ENCODE measurements at regions of chr6 and their contacts with region 1.

Region 1: DNA sequence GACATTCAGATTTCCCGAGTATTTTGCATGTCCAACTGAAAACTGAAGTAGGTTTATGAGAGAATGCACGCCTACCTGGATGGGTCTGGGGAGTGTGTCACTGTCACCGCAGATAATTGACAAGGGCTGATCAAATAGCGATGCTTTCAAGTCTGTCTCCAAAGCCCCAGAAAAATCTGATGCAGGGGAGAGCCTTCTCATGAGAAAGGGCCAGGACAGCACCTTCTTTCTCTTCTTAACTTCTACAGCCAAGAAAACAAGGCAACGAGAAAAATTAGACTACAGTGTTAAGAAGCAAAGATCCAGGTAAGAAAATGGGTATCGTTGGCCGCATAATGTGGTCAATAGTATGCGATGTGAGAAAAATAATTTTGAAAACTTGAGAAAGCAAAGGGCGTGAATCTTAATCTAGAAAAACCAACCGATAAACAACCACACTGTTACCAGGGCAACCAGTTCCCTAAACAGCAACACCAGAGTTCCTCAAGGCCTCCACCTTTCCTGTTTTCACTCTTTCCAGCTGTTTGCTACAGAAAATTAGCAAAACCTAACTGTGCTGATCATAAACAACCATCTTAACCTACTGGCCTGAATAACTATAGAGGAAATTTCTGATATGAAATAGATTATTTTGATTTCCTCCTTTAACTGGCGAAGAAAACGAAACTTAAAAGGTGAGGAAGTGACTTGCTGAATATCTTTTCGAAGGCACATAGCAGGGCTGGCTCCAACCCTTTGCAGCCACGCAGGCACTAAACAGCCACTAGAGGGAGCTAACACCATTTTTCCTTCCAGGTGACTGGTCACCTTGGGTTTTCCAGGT is 2.6 kb downstream of the TAGAP start:
- DNase-seq: peak; percentile 86
- H3K4me3 Mint-ChIP-seq: peak overlapping the region; percentile 94
- H3K27ac Mint-ChIP-seq: peak overlapping the region; percentile 95
- H3K4me1 Mint-ChIP-seq: peaks cover 69% of the 10 kb centered on the region
- H3K27me3 Mint-ChIP-seq: no peaks in the 10 kb centered on the region

Region 2: DNA sequence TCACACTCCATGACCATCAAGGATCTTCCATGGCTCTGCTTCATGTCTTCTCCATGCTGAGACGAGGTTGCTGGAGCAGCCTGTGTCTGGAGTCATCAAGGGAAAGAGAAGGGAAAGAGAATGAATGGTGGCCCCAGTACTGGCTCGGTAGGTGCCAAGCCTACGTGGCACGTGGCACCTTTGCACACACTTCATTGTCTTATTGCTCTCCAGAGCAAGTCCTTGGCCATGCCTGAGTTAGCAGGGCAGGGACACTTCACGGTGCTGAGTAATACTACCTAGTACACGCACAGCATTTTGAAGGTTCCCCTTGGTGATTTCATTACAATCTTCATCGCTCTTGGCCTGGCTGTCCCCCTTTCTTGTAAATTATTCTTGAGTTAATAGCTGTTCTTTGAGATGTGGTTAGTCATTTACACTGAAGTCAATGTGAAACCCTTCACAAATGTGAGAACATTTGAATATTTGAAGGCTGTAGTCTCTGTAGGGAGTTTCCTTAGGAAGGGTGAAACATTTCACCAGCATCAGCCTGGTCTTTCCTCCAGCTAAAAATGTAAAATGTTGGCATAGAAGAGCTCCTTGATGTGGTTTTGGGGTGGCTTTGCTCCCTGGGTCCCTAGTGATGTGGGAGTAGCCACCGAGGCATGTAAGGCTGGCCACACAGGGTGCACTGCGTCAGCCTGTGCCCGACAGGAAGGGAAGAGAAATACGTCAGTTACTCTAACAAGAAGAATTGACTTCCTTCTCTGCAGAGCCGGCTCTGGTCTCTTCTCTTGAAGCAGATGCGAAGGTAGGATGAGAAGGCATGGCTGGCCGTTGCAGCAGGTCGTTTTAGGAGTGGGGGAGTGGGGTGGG is 392.7 kb before region 1 on chr6 and contains the start of gene SYTL3:
- CTCF ChIA-PET with region 1: no interaction called
- POLR2A ChIA-PET with region 1: interaction called, 6 read pairs
- intact Hi-C with region 1: loop called (anchors 2 kb)
- DNase-seq: peak; percentile 93
- H3K4me3 Mint-ChIP-seq: peak within 1 kb of the TSS; percentile 79
- H3K27ac Mint-ChIP-seq: peak within 1 kb of the TSS; percentile 99
- H3K4me1 Mint-ChIP-seq: peaks cover 77% of the 10 kb centered on the region
- H3K27me3 Mint-ChIP-seq: no peaks in the 10 kb centered on the region
- total RNA-seq, gene SYTL3: 181 to 186 TPM

Region 3: DNA sequence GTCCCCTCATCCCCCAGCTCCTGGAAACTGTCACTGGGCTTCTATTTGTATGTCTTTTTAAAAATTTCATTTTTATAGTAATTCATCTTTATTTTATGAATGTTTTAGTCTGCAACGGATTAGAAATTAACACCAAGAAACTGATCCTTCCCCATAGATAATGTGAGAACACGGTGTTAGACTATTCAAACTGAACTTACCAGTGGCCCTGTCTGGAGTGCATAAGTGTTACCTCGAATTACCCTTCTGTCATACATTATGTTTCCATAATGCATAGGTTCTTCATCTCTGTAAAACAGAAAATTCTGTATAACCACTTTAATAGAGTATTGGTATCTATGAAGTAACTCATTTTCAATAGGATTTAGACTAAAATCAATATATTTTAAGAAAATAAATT is 48.6 kb before region 1 on chr6:
- CTCF ChIA-PET with region 1: interaction called, 11 read pairs
- POLR2A ChIA-PET with region 1: interaction called, 4 read pairs
- intact Hi-C with region 1: loop called (anchors 2 kb)
- DNase-seq: no peak
- H3K4me3 Mint-ChIP-seq: no peak overlapping the region
- H3K27ac Mint-ChIP-seq: no peak overlapping the region
- H3K4me1 Mint-ChIP-seq: peaks cover 40% of the 10 kb centered on the region
- H3K27me3 Mint-ChIP-seq: no peaks in the 10 kb centered on the region

Region 4: GRCh38 chr6:159017757-159018559 is 24.3 kb before region 1 on chr6:
- CTCF ChIA-PET with region 1: interaction called, 30 read pairs
- POLR2A ChIA-PET with region 1: interaction called, 44 read pairs
- intact Hi-C with region 1: loop called (anchors 1 kb)
- DNase-seq: no peak
- H3K4me3 Mint-ChIP-seq: no peak overlapping the region
- H3K27ac Mint-ChIP-seq: peak overlapping the region; percentile 79
- H3K4me1 Mint-ChIP-seq: peaks cover 55% of the 10 kb centered on the region
- H3K27me3 Mint-ChIP-seq: no peaks in the 10 kb centered on the region

Region 5: DNA sequence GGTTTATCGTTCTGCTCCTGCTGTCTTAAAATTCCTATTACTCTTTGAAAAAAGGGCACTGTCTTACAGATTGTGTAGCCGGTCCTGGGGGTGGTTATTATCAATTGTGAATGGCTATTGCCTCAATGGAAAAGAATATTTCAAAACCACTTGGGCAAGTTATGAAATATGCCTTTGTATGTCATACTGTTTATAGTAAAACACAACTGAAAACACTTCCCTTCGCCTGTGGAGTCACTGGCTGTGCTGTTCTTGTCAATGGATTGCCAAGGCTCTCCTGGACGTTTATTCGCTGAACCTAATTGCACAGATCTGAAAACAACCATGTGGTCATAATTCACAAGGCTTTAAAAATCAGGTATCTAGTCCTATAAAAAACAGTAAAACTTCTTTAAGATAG is 50.4 kb after region 1 on chr6:
- CTCF ChIA-PET with region 1: interaction called, 370 read pairs
- POLR2A ChIA-PET with region 1: interaction called, 27 read pairs
- intact Hi-C with region 1: loop called (anchors 1 kb)
- DNase-seq: no peak
- H3K4me3 Mint-ChIP-seq: no peak overlapping the region
- H3K27ac Mint-ChIP-seq: no peak overlapping the region
- H3K4me1 Mint-ChIP-seq: peaks cover 66% of the 10 kb centered on the region
- H3K27me3 Mint-ChIP-seq: no peaks in the 10 kb centered on the region

Region 6: GRCh38 chr6:159110013-159110412 is 67.8 kb after region 1 on chr6:
- CTCF ChIA-PET with region 1: interaction called, 370 read pairs
- POLR2A ChIA-PET with region 1: interaction called, 10 read pairs
- intact Hi-C with region 1: no loop called
- DNase-seq: peak; percentile 62
- H3K4me3 Mint-ChIP-seq: no peak overlapping the region
- H3K27ac Mint-ChIP-seq: peak overlapping the region; percentile 19
- H3K4me1 Mint-ChIP-seq: peaks cover 52% of the 10 kb centered on the region
- H3K27me3 Mint-ChIP-seq: no peaks in the 10 kb centered on the region

Measured in activated CD4-positive, alpha-beta memory T cell treated with anti-CD3 and anti-CD28 coated beads for 36 hours (primary cell).